AG04450 (cell line): ENCODE measurements at regions of chr2 and their contacts with region 1.

Region 1: GRCh38 chr2:18149645-18150246 is 271.3 kb downstream of the KCNS3 start:
- DNase-seq: peak; percentile 30
- H3K4me3 ChIP-seq: no peak overlapping the region
- H3K27ac ChIP-seq: no peak overlapping the region
- H3K27me3 ChIP-seq: peaks cover 7% of the 10 kb centered on the region
- CTCF ChIP-seq: peak; percentile 90

Region 2: GRCh38 chr2:17672583-17673317 is 477.0 kb before region 1 on chr2:
- CTCF ChIA-PET with region 1: no interaction called
- POLR2A ChIA-PET with region 1: no interaction called
- DNase-seq: no peak
- H3K4me3 ChIP-seq: no peak overlapping the region
- H3K27ac ChIP-seq: no peak overlapping the region
- H3K27me3 ChIP-seq: no peaks in the 10 kb centered on the region
- CTCF ChIP-seq: no peak

Region 3: DNA sequence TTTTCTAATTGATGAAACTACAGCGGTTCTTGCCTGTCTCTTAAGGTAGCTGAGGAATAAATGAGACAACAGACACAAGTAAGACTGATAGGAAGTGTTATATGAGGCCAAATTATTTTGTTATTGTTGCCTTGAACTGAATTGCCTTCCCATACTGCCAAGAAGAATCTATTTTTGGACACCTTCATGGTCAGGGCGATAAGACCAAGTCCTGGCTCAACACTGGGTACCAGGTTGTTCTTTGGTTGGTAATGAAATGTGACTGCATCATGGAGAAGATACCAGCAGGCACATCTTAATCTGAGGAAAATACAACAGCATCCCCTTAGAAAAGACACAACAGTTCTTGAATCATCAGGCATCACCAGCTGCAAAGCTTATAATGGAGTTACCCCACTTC is 309.8 kb before region 1 on chr2:
- CTCF ChIA-PET with region 1: interaction called, 22 read pairs
- POLR2A ChIA-PET with region 1: no interaction called
- DNase-seq: no peak
- H3K4me3 ChIP-seq: no peak overlapping the region
- H3K27ac ChIP-seq: no peak overlapping the region
- H3K27me3 ChIP-seq: peaks cover 12% of the 10 kb centered on the region
- CTCF ChIP-seq: no peak

Region 4: DNA sequence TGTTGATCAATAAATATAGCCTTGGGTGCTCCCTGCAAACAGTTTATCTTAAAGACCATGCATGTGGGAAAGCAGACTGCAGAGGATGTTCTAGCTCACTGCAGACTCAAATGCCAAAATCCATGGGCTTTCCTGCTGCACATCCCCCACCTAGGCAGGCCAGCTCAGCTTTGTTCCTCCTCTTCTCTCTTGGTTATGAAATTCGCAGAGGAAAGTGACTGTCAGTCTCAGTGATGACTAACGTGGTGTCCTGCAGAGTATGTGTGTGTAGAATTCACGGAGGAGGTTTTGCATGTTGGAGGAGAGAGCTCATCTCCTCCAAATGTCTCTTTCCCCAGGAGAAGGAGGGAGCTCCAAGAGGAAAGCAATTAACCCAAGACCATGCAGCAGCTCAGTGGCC is 292.7 kb before region 1 on chr2:
- CTCF ChIA-PET with region 1: interaction called, 94 read pairs
- POLR2A ChIA-PET with region 1: no interaction called
- DNase-seq: no peak
- H3K4me3 ChIP-seq: no peak overlapping the region
- H3K27ac ChIP-seq: no peak overlapping the region
- H3K27me3 ChIP-seq: peaks cover 3% of the 10 kb centered on the region
- CTCF ChIP-seq: no peak

Region 5: GRCh38 chr2:18136881-18137475 is 12.8 kb before region 1 on chr2:
- CTCF ChIA-PET with region 1: interaction called, 47 read pairs
- POLR2A ChIA-PET with region 1: no interaction called
- DNase-seq: no peak
- H3K4me3 ChIP-seq: no peak overlapping the region
- H3K27ac ChIP-seq: no peak overlapping the region
- H3K27me3 ChIP-seq: no peaks in the 10 kb centered on the region
- CTCF ChIP-seq: no peak

Region 6: GRCh38 chr2:18171191-18172139 is 21.7 kb after region 1 on chr2:
- CTCF ChIA-PET with region 1: interaction called, 16 read pairs
- POLR2A ChIA-PET with region 1: no interaction called
- DNase-seq: peak; percentile 30
- H3K4me3 ChIP-seq: no peak overlapping the region
- H3K27ac ChIP-seq: no peak overlapping the region
- H3K27me3 ChIP-seq: no peaks in the 10 kb centered on the region
- CTCF ChIP-seq: no peak

Region 7: GRCh38 chr2:18369760-18370159 is 220.0 kb after region 1 on chr2:
- CTCF ChIA-PET with region 1: interaction called, 13 read pairs
- POLR2A ChIA-PET with region 1: no interaction called
- DNase-seq: no peak
- H3K4me3 ChIP-seq: no peak overlapping the region
- H3K27ac ChIP-seq: no peak overlapping the region
- H3K27me3 ChIP-seq: no peaks in the 10 kb centered on the region
- CTCF ChIP-seq: no peak

Region 8: DNA sequence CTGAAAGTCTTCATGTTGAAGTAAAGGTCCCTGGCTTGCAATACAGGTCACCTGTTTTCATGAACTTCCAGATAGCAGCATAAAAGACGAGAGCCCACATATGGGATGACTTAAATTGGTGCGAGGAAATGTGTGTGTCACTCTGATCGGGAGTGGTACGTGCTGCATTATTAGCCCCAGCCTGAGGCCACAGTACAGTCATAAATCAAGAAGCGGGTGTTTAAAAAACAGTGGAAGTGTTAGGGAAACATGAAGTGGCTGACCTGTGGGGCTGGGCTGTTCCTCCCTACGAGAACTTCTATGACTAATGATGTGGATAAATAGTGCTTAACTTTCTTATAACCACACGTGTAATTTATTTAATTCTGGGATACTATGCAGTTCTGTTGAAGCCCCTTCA is 386.4 kb after region 1 on chr2:
- CTCF ChIA-PET with region 1: no interaction called
- POLR2A ChIA-PET with region 1: no interaction called
- DNase-seq: no peak
- H3K4me3 ChIP-seq: no peak overlapping the region
- H3K27ac ChIP-seq: no peak overlapping the region
- H3K27me3 ChIP-seq: no peaks in the 10 kb centered on the region
- CTCF ChIP-seq: no peak